ENCODE measurements at regions of chr15 and their contacts with region 1.

Region 1: DNA sequence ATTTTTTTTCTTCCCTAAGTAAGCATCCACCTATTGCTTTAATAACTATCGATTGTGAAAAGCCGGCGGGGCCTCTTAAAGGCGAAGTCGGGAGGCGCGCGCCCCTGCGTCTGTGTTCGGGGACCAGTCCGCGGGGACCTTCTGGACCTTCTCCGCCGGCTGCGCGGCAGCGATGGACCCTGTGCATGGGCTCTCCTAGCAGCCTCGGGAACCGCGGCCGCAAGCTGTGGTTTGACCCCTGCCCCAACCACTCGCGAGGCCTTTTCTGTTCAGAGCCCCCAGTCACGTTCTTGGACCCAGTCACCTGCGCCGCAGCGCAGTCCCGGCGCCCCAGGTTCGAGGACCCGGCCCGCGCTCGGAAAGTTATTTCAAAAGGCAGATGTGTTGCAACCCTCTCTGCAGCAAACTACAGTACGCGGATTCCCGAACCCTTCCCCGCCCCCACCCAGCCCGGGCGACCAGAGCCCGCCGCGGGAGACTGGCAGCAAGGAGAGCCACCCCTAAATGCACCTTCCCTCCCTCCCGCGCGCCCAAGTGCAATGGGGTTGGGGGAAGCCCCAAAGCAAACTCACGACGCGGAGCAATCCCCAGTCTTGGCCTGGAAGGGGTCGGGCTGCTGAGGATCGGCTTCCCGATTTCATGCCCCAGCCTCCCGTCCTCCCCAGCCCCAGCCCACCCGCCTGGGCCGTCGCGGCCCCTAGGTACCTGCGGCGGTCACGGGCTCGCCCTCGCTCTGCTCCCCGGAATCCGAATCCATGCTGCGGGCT is 684 bp downstream of the TNFAIP8L3 start:
- DNase-seq: peak; percentile 69
- H3K4me3 ChIP-seq: peak overlapping the region; percentile 49 to 67 (median 62)
- H3K27ac ChIP-seq: peak overlapping the region; percentile 61 to 87 (median 74)
- H3K4me1 ChIP-seq: peaks cover 0 to 29% (median 24%) of the 10 kb centered on the region in 4 donors
- H3K27me3 ChIP-seq: peaks cover 0 to 6% (median 5%) of the 10 kb centered on the region in 3 donors
- CTCF ChIP-seq: no peak
- EP300 ChIP-seq: no peak
- POLR2A ChIP-seq: no peak

Region 2: GRCh38 chr15:51046799-51047482 is 47.1 kb before region 1 on chr15:
- intact Hi-C with region 1: loop called (anchors 10 kb)
- DNase-seq: peak; percentile 71
- H3K4me3 ChIP-seq: no peak overlapping the region
- H3K27ac ChIP-seq: peak overlapping the region in 2 of 4 donors; percentile 3 to 23
- H3K4me1 ChIP-seq: peaks cover 0 to 37% (median 30%) of the 10 kb centered on the region in 4 donors
- H3K27me3 ChIP-seq: no peaks in the 10 kb centered on the region
- CTCF ChIP-seq: no peak
- EP300 ChIP-seq: no peak
- POLR2A ChIP-seq: no peak

Region 3: DNA sequence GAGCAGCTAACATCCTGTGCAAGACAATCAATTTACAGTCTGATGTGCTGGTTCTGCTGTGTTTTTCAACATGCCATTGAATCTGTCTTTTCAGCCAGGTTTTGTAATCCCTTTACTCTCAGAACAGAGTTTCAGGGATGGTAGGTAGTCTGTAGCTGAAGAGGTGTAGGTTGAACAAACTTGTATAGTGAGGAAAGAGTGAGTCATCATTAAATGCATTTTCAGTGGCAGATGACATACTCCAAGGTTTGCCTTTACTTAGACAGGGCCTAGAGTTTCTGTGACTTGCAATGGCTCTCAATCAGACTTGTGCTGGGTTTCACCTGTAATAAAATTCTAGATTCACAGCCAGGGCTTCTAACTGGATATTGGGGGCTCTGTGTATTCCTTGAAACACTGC is 149.7 kb after region 1 on chr15:
- intact Hi-C with region 1: no loop called
- DNase-seq: no peak
- H3K4me3 ChIP-seq: no peak overlapping the region
- H3K27ac ChIP-seq: no peak overlapping the region
- H3K4me1 ChIP-seq: no peaks in the 10 kb centered on the region
- H3K27me3 ChIP-seq: peaks cover 0 to 4% (median 0%) of the 10 kb centered on the region in 3 donors
- CTCF ChIP-seq: no peak
- EP300 ChIP-seq: no peak
- POLR2A ChIP-seq: no peak

Measured in sigmoid colon (tissue), 7 donors.